Calu3 (cell line): ENCODE measurements at regions of chr2 and their contacts with region 1.

Region 1: GRCh38 chr2:44342854-44343253 is 18.4 kb downstream of the PREPL start:
- DNase-seq: peak; percentile 24
- H3K4me3 Mint-ChIP-seq: no peak overlapping the region
- H3K27ac Mint-ChIP-seq: no peak overlapping the region
- H3K4me1 Mint-ChIP-seq: no peaks in the 10 kb centered on the region
- H3K27me3 Mint-ChIP-seq: no peaks in the 10 kb centered on the region
- CTCF ChIP-seq: no peak

Region 2: GRCh38 chr2:44044281-44044720 is 298.6 kb before region 1 on chr2:
- CTCF ChIA-PET with region 1: interaction called, 11 read pairs
- intact Hi-C with region 1: loop called (anchors 1 kb)
- DNase-seq: peak; percentile 90
- H3K4me3 Mint-ChIP-seq: no peak overlapping the region
- H3K27ac Mint-ChIP-seq: no peak overlapping the region
- H3K4me1 Mint-ChIP-seq: no peaks in the 10 kb centered on the region
- H3K27me3 Mint-ChIP-seq: no peaks in the 10 kb centered on the region
- CTCF ChIP-seq: peak; percentile 86